ENCODE measurements at regions of chr12 and their contacts with region 1.

Region 1: GRCh38 chr12:104381731-104382480 is 74.8 kb upstream of the CHST11 start:
- DNase-seq: peak; percentile 88
- ATAC-seq: peak; percentile 90
- H3K4me3 Mint-ChIP-seq: no peak overlapping the region
- H3K27ac Mint-ChIP-seq: peak overlapping the region; percentile 16
- H3K4me1 Mint-ChIP-seq: peaks cover 14% of the 10 kb centered on the region
- H3K27me3 Mint-ChIP-seq: peaks cover 8% of the 10 kb centered on the region

Region 2: GRCh38 chr12:104353012-104353981 is 28.6 kb before region 1 on chr12:
- CTCF ChIA-PET with region 1: no interaction called
- DNase-seq: peak; percentile 31
- ATAC-seq: no peak
- H3K4me3 Mint-ChIP-seq: no peak overlapping the region
- H3K27ac Mint-ChIP-seq: no peak overlapping the region
- H3K4me1 Mint-ChIP-seq: peaks cover 7% of the 10 kb centered on the region
- H3K27me3 Mint-ChIP-seq: no peaks in the 10 kb centered on the region

Region 3: GRCh38 chr12:104371043-104371870 is 10.6 kb before region 1 on chr12:
- CTCF ChIA-PET with region 1: interaction called, 14 read pairs
- DNase-seq: peak; percentile 34
- ATAC-seq: no peak
- H3K4me3 Mint-ChIP-seq: no peak overlapping the region
- H3K27ac Mint-ChIP-seq: peak overlapping the region; percentile 37
- H3K4me1 Mint-ChIP-seq: peaks cover 18% of the 10 kb centered on the region
- H3K27me3 Mint-ChIP-seq: no peaks in the 10 kb centered on the region

Region 4: GRCh38 chr12:104569346-104570173 is 187.7 kb after region 1 on chr12:
- CTCF ChIA-PET with region 1: interaction called, 22 read pairs
- DNase-seq: peak; percentile 90
- ATAC-seq: peak; percentile 80
- H3K4me3 Mint-ChIP-seq: peak overlapping the region; percentile 54
- H3K27ac Mint-ChIP-seq: peak overlapping the region; percentile 94
- H3K4me1 Mint-ChIP-seq: peaks cover 77% of the 10 kb centered on the region
- H3K27me3 Mint-ChIP-seq: no peaks in the 10 kb centered on the region

Region 5: DNA sequence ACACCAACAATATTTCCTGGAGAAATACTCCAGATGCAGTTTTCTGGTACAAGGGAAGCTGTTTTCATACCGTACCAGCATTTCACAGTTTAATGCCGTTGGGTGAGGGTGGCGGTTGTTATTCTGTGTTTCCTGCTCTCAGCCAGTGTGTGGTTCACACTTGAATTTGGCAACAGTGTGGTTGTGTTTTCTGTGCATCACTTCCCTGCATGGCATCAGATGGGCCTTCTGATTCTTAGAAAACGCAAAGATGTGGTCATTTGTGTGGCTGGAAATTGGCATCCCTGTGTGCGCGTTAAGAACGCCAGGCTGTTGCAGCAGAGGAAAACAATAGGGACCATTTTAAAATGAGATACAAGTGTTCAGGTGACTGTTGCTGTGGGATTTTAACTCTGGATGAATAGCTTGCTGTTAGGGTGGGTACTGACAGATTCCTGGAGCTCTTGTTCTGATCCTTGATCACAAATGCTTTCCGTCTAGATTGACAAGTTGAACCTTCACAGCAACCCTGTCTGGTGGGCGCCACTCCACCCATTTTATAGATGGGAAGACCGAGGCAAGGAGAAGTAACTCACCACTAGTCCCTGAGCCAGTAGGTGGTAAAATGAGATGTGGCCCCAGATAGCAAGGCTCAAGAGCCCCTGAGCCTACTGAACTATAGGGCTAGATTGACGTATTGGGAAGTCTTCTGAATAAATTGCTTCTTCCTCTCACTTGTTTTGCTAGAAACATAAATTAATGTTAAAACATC is 306.1 kb after region 1 on chr12:
- CTCF ChIA-PET with region 1: interaction called, 11 read pairs
- DNase-seq: peak; percentile 89
- ATAC-seq: peak; percentile 75
- H3K4me3 Mint-ChIP-seq: peak overlapping the region; percentile 44
- H3K27ac Mint-ChIP-seq: peak overlapping the region; percentile 96
- H3K4me1 Mint-ChIP-seq: peaks cover 84% of the 10 kb centered on the region
- H3K27me3 Mint-ChIP-seq: no peaks in the 10 kb centered on the region

Region 6: GRCh38 chr12:104877123-104877705 is 495.3 kb after region 1 on chr12:
- CTCF ChIA-PET with region 1: interaction called, 29 read pairs
- DNase-seq: peak; percentile 45
- ATAC-seq: no peak
- H3K4me3 Mint-ChIP-seq: no peak overlapping the region
- H3K27ac Mint-ChIP-seq: no peak overlapping the region
- H3K4me1 Mint-ChIP-seq: peaks cover 3% of the 10 kb centered on the region
- H3K27me3 Mint-ChIP-seq: peaks cover 17% of the 10 kb centered on the region

Region 7: DNA sequence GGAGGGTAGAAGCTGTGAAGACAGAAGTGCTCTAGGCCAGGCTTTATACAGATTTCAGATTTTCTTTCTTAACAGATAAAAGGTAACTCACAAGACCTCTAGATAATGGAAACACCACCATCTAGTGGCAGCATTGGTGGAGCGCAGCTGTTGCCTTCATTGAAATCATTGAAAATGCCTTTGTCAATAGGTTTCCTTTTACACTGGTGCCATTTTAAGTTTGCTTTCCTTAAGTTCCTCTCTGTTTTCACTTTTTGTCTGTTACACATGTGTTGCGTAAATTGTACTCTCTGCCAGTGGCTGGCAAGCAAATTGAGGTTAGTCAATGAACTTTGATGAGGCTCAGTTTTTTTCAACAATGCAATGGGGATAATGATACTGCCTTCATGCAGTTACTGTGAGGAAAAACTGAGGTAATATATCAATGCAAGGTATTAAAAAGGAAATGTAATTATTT is 671.2 kb after region 1 on chr12:
- CTCF ChIA-PET with region 1: interaction called, 47 read pairs
- DNase-seq: peak; percentile 87
- ATAC-seq: peak; percentile 88
- H3K4me3 Mint-ChIP-seq: no peak overlapping the region
- H3K27ac Mint-ChIP-seq: no peak overlapping the region
- H3K4me1 Mint-ChIP-seq: peaks cover 7% of the 10 kb centered on the region
- H3K27me3 Mint-ChIP-seq: peaks cover 7% of the 10 kb centered on the region